ENCODE measurements at regions of chr9 and their contacts with region 1.

Region 1: DNA sequence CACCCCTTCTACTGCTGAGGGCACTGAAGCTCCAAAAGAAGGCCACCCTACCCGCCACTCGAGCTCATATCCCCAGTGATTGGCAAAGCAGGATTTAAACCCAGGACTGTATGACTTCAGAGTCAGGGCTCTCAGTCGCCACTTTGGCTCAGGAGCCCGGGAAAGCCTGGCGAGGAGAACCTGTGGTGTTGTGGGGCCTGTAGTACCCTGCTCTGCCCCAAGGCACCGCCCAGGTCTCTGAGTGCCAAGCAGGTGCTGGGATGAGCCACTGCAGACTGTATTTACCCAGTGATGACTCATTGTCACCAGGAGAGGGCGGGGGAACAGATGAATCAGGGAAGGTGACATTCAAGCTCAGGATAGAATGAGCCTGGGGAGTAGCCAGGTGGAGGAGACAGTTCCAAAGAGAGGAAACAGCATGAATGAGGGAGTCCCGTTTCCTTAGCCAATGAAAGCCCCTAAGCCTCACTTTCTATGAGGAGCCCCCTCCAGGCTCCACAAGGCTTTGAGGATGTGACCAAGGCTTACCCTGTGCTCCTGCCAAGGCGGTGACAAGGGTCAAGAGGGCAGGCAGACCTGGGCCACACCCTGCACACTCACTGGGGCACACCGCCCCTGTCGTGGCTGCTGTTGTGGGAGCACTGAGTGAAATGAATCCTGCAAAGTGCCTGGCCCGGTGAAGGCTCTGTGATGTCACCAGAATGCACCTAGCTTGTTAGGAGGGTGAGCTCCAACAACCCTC is 17.8 kb upstream of the DPM2 start:
- DNase-seq: peak; percentile 93
- ATAC-seq: peak; percentile 79
- H3K4me3 ChIP-seq: 0 out of 6 replicates have a peak overlapping the region, but pooled peaks of 1 of the 3 experiments have one; percentile 8
- H3K27ac ChIP-seq: peak overlapping the region; percentile 96
- H3K4me1 ChIP-seq: peaks cover 62% of the 10 kb centered on the region
- H3K27me3 ChIP-seq: no peaks in the 10 kb centered on the region
- CTCF ChIP-seq: peak; percentile 83
- EP300 ChIP-seq: peak in 1 of 2 experiments; percentile 63; a peak in 2 of 4 replicates
- POLR2A ChIP-seq: no peak
- RAD21 ChIP-seq: peak; percentile 81

Region 2: DNA sequence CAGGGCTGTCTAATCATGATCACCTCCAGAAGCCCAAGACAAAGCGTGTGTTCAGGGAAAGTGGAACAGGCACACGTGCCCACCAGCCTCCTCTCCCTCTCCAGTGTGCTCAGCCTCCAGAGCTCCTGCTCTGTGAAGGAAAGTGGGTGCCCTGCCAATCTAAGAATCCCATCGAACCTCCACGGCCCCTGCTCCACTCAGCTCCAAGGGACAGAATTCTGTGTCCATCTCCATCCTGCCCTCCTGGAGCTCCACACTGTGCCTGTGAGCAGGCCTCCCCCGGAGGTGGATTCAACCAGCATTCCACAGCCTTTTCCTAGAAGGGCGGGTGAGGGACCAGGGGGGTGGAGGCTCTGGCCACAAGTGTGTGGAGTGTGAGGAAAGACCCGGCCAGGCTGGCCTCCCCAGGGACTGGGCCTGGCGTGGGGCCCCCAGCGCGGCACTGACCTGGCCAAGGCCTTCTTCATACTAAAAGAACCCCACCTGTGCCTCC is 19.4 kb after region 1 on chr9:
- CTCF ChIA-PET with region 1: no interaction called
- POLR2A ChIA-PET with region 1: interaction called, 11 read pairs
- in situ Hi-C with region 1: no loop called
- intact Hi-C with region 1: loop called (anchors 1 kb)
- DNase-seq: no peak
- ATAC-seq: no peak
- H3K4me3 ChIP-seq: no peak overlapping the region
- H3K27ac ChIP-seq: no peak overlapping the region
- H3K4me1 ChIP-seq: peaks cover 64% of the 10 kb centered on the region
- H3K27me3 ChIP-seq: no peaks in the 10 kb centered on the region; a peak in 1 of 5 replicates
- CTCF ChIP-seq: no peak
- EP300 ChIP-seq: no peak
- POLR2A ChIP-seq: no peak
- RAD21 ChIP-seq: no peak

Region 3: DNA sequence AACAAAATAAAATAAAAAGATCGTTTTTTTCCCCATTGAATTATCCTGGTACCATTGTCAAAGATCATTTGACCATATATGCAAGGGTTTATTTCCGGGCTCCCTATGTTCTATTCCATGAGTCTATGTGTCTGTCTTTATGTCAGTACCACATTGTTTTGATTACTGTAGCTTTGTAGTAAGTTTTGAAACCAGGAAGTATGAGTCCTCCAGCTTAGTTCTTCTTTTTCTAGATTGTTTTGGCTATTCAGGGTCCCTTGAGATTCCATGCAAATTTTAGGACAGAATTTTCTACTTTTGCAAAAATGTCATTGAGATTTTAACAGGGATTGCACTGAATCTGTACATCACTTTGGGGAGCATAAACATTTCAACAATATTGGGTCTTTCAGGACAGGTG is 44.0 kb after region 1 on chr9:
- CTCF ChIA-PET with region 1: no interaction called
- POLR2A ChIA-PET with region 1: no interaction called
- in situ Hi-C with region 1: no loop called
- intact Hi-C with region 1: no loop called
- DNase-seq: no peak
- ATAC-seq: no peak
- H3K4me3 ChIP-seq: no peak overlapping the region
- H3K27ac ChIP-seq: no peak overlapping the region
- H3K4me1 ChIP-seq: peaks cover 49% of the 10 kb centered on the region
- H3K27me3 ChIP-seq: peaks cover 0 to 4% of the 10 kb centered on the region in 2 experiments; a peak in 1 of 5 replicates
- CTCF ChIP-seq: no peak
- EP300 ChIP-seq: no peak
- POLR2A ChIP-seq: no peak
- RAD21 ChIP-seq: no peak